Activated CD4-positive, alpha-beta memory T cell treated with anti-CD3 and anti-CD28 coated beads, Interleukin-2, amount 10 ng/mL, durations not matched to agents 7 days and 5 days (primary cell): ENCODE measurements at regions of chr11 and their contacts with region 1.

Region 1: DNA sequence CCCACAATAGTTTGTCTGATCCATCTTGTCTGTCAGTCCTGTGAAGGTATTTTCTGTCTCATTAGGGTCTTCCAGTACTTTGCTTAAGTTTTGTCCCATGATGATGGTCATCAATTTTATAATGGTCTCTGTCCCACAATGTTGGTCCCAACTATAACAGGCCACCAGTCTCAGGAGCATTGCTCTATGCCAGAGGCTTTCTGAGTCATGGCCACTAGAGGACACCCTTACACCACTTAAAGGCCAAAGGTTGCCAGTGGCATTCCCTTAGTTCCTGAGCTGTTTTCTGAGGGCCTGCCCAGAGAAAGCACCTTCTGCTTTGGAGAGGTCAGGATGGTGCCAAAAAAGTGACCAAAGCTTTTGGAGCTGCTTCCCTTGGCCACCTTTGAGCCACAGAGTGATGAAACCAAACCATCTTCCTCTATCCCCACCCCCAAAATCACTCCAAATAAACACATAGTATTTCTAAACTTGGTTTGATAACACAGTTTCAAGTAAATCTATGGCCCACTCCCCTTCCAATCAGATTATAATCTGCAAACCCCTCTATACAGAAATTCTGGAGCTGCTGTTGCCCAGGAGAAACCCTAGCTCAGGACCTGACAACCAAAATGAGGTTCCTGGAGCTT is 19.3 kb downstream of the EIF3F start:
- DNase-seq: peak; percentile 41
- H3K4me3 Mint-ChIP-seq: no peak overlapping the region
- H3K27ac Mint-ChIP-seq: no peak overlapping the region
- H3K4me1 Mint-ChIP-seq: no peaks in the 10 kb centered on the region
- H3K27me3 Mint-ChIP-seq: peaks cover 2% of the 10 kb centered on the region

Region 2: DNA sequence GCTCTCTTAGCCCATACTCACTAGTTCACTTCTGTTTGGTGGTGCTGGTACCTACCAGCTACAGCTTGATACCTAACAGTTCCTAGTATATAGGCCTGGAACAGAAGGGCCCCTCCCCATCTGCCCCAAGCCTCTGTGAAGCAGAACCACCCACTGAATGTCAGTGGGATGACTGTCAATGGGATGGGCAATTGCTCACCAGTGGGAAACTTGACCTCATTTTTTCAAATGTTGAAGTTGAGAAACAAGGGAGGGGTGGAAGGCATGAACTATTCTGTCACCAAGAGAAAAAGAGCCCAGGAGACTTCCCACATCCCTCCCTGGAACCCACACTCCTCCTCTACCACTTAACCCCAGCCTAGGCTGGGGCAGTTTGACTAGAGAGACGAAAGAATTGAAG is 41.1 kb before region 1 on chr11 and contains the start of gene NLRP10:
- CTCF ChIA-PET with region 1: no interaction called
- POLR2A ChIA-PET with region 1: no interaction called
- DNase-seq: no peak
- H3K4me3 Mint-ChIP-seq: no peak within 1 kb of the TSS
- H3K27ac Mint-ChIP-seq: no peak within 1 kb of the TSS
- H3K4me1 Mint-ChIP-seq: no peaks in the 10 kb centered on the region
- H3K27me3 Mint-ChIP-seq: peaks cover 15% of the 10 kb centered on the region
- total RNA-seq, gene NLRP10: not detected

Region 3: GRCh38 chr11:7986768-7987559 is 19.5 kb before region 1 on chr11 and contains the start of gene EIF3F:
- CTCF ChIA-PET with region 1: interaction called, 11 read pairs
- POLR2A ChIA-PET with region 1: interaction called, 3 read pairs
- DNase-seq: peak; percentile 92
- H3K4me3 Mint-ChIP-seq: peak within 1 kb of the TSS; percentile 89
- H3K27ac Mint-ChIP-seq: peak within 1 kb of the TSS; percentile 88
- H3K4me1 Mint-ChIP-seq: peaks cover 41% of the 10 kb centered on the region
- H3K27me3 Mint-ChIP-seq: no peaks in the 10 kb centered on the region
- total RNA-seq, gene EIF3F: 227 to 229 TPM

Region 4: GRCh38 chr11:8018484-8019313 is 12.2 kb after region 1 on chr11:
- CTCF ChIA-PET with region 1: interaction called, 11 read pairs
- POLR2A ChIA-PET with region 1: interaction called, 4 read pairs
- DNase-seq: peak; percentile 77
- H3K4me3 Mint-ChIP-seq: peak overlapping the region; percentile 65
- H3K27ac Mint-ChIP-seq: no peak overlapping the region
- H3K4me1 Mint-ChIP-seq: peaks cover 14% of the 10 kb centered on the region
- H3K27me3 Mint-ChIP-seq: peaks cover 49% of the 10 kb centered on the region

Region 5: DNA sequence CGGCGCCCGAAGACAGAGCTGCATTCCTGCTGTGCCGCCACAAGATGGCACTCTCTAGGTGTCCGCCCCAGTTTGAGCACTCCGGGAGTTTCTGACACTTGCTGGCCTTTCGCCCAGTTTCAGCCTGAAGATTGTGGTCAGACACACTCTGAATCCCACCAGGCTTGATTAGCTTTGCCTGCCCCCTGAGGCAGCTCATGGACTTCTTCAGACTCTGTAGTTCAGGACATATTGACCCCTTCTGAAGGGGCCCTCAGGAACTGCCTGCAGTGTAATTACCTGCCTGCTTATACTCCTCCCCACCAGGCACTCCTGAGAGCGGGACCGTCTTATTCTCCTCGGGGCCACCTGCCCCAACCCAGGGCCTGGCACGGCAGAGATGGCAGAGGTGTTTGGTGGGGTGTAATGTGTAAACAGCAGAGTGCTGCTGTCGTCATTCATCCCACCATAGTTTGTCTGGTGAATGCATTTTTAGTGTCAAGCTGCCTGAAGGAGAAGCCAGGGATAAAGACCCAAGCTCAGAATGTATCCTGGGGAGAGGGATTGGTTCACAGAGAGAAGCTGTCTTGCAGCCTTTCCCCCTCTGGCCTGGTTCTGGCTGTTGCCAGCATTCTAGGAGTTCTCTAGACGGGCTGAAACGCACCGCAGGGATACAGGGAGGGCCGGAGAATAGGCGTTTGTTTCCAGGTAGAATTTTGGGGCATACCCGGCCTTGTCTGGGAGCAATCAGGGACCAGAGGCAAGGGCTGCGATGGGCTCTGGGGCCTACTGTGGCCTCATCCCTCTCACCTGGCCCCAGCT is 27.0 kb after region 1 on chr11:
- CTCF ChIA-PET with region 1: interaction called, 27 read pairs
- POLR2A ChIA-PET with region 1: interaction called, 9 read pairs
- DNase-seq: peak; percentile 45
- H3K4me3 Mint-ChIP-seq: no peak overlapping the region
- H3K27ac Mint-ChIP-seq: no peak overlapping the region
- H3K4me1 Mint-ChIP-seq: no peaks in the 10 kb centered on the region
- H3K27me3 Mint-ChIP-seq: peaks cover 7% of the 10 kb centered on the region

Region 6: GRCh38 chr11:8068605-8069221 is 62.2 kb after region 1 on chr11:
- CTCF ChIA-PET with region 1: interaction called, 10 read pairs
- POLR2A ChIA-PET with region 1: no interaction called
- DNase-seq: no peak
- H3K4me3 Mint-ChIP-seq: no peak overlapping the region
- H3K27ac Mint-ChIP-seq: no peak overlapping the region
- H3K4me1 Mint-ChIP-seq: no peaks in the 10 kb centered on the region
- H3K27me3 Mint-ChIP-seq: peaks cover 11% of the 10 kb centered on the region

Region 7: GRCh38 chr11:8092587-8093424 is 86.3 kb after region 1 on chr11:
- CTCF ChIA-PET with region 1: interaction called, 80 read pairs
- POLR2A ChIA-PET with region 1: no interaction called
- DNase-seq: peak; percentile 48
- H3K4me3 Mint-ChIP-seq: no peak overlapping the region
- H3K27ac Mint-ChIP-seq: no peak overlapping the region
- H3K4me1 Mint-ChIP-seq: no peaks in the 10 kb centered on the region
- H3K27me3 Mint-ChIP-seq: no peaks in the 10 kb centered on the region

Region 8: DNA sequence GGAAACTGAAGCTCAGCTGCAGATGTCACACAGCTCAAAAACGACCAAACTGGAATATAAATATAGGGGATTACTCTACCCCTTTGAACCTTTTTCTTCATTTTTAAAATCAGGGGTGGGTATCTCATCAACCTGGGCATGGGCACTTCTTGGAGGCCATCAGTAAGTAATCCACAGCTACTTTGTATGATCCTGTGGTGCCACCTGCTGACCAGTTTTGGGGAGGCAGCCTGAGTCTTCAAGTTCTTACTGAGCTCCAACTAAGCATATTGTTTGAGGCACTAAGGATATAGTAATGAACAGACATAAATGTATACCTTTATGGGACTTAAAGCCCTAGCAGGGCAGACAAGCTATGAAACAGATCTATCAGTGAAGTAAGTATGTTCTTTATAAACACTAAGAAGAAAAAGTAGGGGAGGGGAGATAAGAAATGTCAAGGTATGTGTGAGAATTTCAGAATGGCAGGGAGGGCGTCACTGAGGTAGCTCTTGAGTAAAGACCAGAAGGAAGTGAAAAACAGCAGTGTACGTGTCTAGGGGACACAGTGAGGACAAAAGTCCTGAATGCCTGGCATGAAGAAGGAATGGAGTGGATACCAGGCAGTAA is 92.9 kb after region 1 on chr11:
- CTCF ChIA-PET with region 1: interaction called, 80 read pairs
- POLR2A ChIA-PET with region 1: no interaction called
- DNase-seq: peak; percentile 76
- H3K4me3 Mint-ChIP-seq: no peak overlapping the region
- H3K27ac Mint-ChIP-seq: no peak overlapping the region
- H3K4me1 Mint-ChIP-seq: no peaks in the 10 kb centered on the region
- H3K27me3 Mint-ChIP-seq: no peaks in the 10 kb centered on the region

Region 9: GRCh38 chr11:8126649-8127289 is 120.3 kb after region 1 on chr11:
- CTCF ChIA-PET with region 1: no interaction called
- POLR2A ChIA-PET with region 1: no interaction called
- DNase-seq: no peak
- H3K4me3 Mint-ChIP-seq: no peak overlapping the region
- H3K27ac Mint-ChIP-seq: no peak overlapping the region
- H3K4me1 Mint-ChIP-seq: no peaks in the 10 kb centered on the region
- H3K27me3 Mint-ChIP-seq: peaks cover 2% of the 10 kb centered on the region